ENCODE measurements at regions of chr1 and their contacts with region 1.

Region 1: GRCh38 chr1:61851849-61852669 is 109.8 kb downstream of the PATJ start:
- DNase-seq: peak; percentile 74
- H3K4me3 ChIP-seq: no peak overlapping the region
- H3K27ac ChIP-seq: peak overlapping the region; percentile 45
- H3K4me1 ChIP-seq: peaks cover 14% of the 10 kb centered on the region
- H3K27me3 ChIP-seq: no peaks in the 10 kb centered on the region
- CTCF ChIP-seq: peak; percentile 40 to 58
- POLR2A ChIP-seq: no peak

Region 2: DNA sequence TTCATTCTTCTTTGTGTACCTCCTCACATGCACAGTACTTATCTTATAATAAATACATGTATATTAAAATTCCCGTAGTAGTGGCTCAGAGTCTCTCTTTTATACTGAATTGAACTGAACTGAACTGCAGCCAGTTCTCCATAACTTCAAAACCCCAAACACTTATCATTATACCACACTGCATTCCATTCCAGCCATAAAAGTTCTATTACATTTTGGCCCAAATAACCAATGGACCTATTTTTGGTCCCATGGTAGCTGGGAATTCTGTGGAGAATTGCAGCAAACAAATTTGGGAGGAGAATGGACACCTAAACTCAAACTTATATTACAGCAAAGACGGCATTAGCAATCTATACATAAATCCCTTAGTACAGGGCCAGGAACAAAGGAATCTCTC is 1691.9 kb before region 1 on chr1:
- CTCF ChIA-PET with region 1: interaction called, 11 read pairs
- POLR2A ChIA-PET with region 1: no interaction called
- dilution Hi-C with region 1: no loop called
- intact Hi-C with region 1: loop called (anchors 1 kb)
- DNase-seq: no peak
- H3K4me3 ChIP-seq: no peak overlapping the region
- H3K27ac ChIP-seq: no peak overlapping the region
- H3K4me1 ChIP-seq: no peaks in the 10 kb centered on the region
- H3K27me3 ChIP-seq: no peaks in the 10 kb centered on the region
- CTCF ChIP-seq: no peak
- POLR2A ChIP-seq: no peak

Region 3: GRCh38 chr1:60969971-60970509 is 882.0 kb before region 1 on chr1:
- CTCF ChIA-PET with region 1: interaction called, 7 read pairs
- POLR2A ChIA-PET with region 1: no interaction called
- dilution Hi-C with region 1: no loop called
- intact Hi-C with region 1: loop called (anchors 2 kb)
- DNase-seq: peak; percentile 57
- H3K4me3 ChIP-seq: no peak overlapping the region
- H3K27ac ChIP-seq: no peak overlapping the region
- H3K4me1 ChIP-seq: peaks cover 5% of the 10 kb centered on the region
- H3K27me3 ChIP-seq: no peaks in the 10 kb centered on the region
- CTCF ChIP-seq: peak in 1 of 2 donors; percentile 21
- POLR2A ChIP-seq: no peak

Region 4: GRCh38 chr1:61049850-61050540 is 802.1 kb before region 1 on chr1:
- CTCF ChIA-PET with region 1: interaction called, 65 read pairs
- POLR2A ChIA-PET with region 1: no interaction called
- dilution Hi-C with region 1: no loop called
- intact Hi-C with region 1: loop called (anchors 1 kb)
- DNase-seq: peak; percentile 93
- H3K4me3 ChIP-seq: peak overlapping the region; percentile 62 to 95 (median 92)
- H3K27ac ChIP-seq: peak overlapping the region; percentile 84
- H3K4me1 ChIP-seq: peaks cover 16% of the 10 kb centered on the region
- H3K27me3 ChIP-seq: no peaks in the 10 kb centered on the region
- CTCF ChIP-seq: peak; percentile 89 to 96
- POLR2A ChIP-seq: peak; percentile 40

Region 5: DNA sequence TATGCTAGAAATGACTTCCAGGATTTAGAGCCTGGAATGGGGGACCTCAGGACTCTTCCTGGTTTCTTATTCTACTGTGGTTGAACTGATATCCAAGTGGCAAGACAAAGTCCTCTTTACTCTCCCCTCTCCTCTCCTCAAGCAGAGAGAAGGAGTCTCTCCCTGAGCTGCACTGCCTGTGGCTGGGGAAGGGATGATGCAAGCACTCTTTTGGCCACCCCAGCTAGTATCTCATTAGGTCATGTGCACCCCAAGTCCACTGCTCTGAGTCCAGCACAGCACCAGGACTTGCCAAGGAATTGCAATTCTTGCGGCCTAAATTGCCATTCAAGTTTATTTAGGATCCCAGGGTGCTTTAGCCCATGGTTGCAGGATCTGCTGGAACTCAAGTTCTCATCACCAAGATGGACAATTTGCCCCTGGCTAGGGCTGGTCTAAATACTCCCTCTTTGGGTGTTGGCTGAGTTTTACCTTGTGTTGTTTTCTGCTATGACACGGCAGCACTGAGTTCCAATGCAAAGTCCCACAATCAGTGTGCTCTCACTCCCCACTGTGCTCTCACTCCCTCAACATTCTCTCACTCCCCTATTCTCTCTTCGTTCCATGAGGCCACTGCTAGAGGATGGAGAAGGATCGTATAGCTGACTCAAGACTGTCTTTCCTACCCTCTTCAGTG is 299.3 kb before region 1 on chr1:
- CTCF ChIA-PET with region 1: no interaction called
- POLR2A ChIA-PET with region 1: no interaction called
- dilution Hi-C with region 1: no loop called
- intact Hi-C with region 1: no loop called
- DNase-seq: no peak
- H3K4me3 ChIP-seq: no peak overlapping the region
- H3K27ac ChIP-seq: no peak overlapping the region
- H3K4me1 ChIP-seq: no peaks in the 10 kb centered on the region
- H3K27me3 ChIP-seq: peaks cover 0 to 2% of the 10 kb centered on the region in 2 experiments
- CTCF ChIP-seq: no peak
- POLR2A ChIP-seq: no peak

Region 6: DNA sequence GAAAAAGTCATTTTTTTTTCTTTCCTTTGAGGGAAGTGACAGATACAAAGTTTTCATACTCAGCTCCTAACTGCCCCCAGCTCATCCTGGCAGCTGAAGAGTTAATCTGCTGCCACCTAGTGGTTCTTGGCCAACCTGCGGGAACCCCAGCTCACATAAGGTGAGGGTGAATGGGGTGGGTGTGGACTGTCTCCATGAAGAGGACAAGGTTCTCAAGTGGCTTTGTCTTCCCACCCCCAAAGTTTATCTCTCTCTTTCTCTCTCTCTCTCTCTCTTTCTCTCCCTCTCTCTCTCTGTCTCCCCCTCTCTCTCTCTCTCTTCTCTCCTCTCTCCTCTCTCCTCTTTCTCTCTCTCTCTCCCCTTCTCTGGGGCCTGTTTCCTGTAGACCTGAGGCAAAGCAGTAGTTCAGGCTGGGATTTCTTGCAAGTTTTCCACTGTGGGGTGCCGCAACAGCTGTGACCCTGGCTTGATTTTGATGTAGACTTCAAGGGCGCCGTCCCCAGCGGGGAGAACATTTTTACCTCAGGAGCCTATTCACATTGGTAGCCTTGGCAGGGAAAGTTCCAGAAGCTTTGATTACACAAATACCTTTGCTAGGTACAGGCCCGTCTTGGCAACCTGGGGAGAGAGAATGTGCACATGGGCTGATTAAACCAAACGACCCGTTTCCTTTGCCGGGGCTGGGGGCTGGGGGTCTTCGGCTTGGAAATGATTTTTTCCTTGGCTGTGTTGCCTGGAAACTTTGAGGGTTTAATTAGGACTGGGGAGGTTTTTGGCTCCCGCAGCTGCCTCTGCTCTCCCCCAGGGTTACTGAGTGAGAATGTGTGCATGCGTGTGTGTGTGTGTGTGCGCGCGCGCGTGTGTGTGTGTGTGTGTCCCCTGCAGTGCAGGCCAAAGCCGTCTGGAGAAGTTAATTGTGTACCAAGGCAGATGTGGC is 263.1 kb before region 1 on chr1:
- CTCF ChIA-PET with region 1: interaction called, 31 read pairs
- POLR2A ChIA-PET with region 1: no interaction called
- dilution Hi-C with region 1: no loop called
- intact Hi-C with region 1: loop called (anchors 1 kb)
- DNase-seq: peak; percentile 69
- H3K4me3 ChIP-seq: no peak overlapping the region
- H3K27ac ChIP-seq: no peak overlapping the region
- H3K4me1 ChIP-seq: no peaks in the 10 kb centered on the region
- H3K27me3 ChIP-seq: peaks cover 0 to 2% of the 10 kb centered on the region in 2 experiments
- CTCF ChIP-seq: peak; percentile 83 to 86
- POLR2A ChIP-seq: no peak

Region 7: GRCh38 chr1:61724813-61725694 is 127.0 kb before region 1 on chr1 and contains the start of gene TM2D1:
- CTCF ChIA-PET with region 1: interaction called, 3 read pairs
- POLR2A ChIA-PET with region 1: no interaction called
- dilution Hi-C with region 1: no loop called
- intact Hi-C with region 1: loop called (anchors 1 kb)
- DNase-seq: peak; percentile 88
- H3K4me3 ChIP-seq: peak within 1 kb of the TSS; percentile 81 to 97 (median 87)
- H3K27ac ChIP-seq: peak within 1 kb of the TSS; percentile 97
- H3K4me1 ChIP-seq: peaks cover 18% of the 10 kb centered on the region
- H3K27me3 ChIP-seq: no peaks in the 10 kb centered on the region
- CTCF ChIP-seq: no peak
- POLR2A ChIP-seq: peak; percentile 99
- total RNA-seq, gene TM2D1: 37.5 and 46.1 TPM in 2 replicates

Region 8: DNA sequence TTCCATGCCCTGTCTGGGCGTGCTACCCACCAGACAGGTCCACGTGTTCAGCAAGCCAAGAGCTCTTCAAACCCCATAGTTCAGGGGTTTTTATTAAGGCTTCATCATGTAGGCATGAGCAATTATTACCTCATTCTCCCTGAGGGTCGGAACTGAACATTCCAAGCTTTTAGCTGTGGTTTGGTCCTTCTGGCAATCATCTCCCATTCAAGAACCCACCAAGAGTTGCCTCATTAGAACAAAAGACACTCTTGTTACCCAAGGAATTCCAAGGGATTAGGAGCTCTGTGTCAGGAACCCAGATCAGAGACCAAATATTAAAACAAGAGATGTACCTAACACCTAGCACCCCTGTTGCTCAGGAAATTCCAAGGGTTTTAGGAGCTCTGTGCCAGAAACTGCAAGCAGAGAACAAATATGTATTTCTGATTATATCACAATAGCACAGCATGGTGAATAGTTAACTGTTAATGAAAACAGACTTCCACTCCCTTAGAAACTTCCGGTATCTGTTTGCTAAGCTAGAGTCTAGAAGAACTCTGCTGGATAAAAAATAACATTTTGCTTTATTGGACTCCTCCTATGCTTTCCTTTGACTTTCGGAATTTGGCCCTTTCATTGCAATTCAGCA is 141.4 kb after region 1 on chr1:
- CTCF ChIA-PET with region 1: no interaction called
- POLR2A ChIA-PET with region 1: no interaction called
- dilution Hi-C with region 1: no loop called
- intact Hi-C with region 1: no loop called
- DNase-seq: no peak
- H3K4me3 ChIP-seq: no peak overlapping the region
- H3K27ac ChIP-seq: no peak overlapping the region
- H3K4me1 ChIP-seq: no peaks in the 10 kb centered on the region
- H3K27me3 ChIP-seq: no peaks in the 10 kb centered on the region
- CTCF ChIP-seq: no peak
- POLR2A ChIP-seq: no peak

Region 9: DNA sequence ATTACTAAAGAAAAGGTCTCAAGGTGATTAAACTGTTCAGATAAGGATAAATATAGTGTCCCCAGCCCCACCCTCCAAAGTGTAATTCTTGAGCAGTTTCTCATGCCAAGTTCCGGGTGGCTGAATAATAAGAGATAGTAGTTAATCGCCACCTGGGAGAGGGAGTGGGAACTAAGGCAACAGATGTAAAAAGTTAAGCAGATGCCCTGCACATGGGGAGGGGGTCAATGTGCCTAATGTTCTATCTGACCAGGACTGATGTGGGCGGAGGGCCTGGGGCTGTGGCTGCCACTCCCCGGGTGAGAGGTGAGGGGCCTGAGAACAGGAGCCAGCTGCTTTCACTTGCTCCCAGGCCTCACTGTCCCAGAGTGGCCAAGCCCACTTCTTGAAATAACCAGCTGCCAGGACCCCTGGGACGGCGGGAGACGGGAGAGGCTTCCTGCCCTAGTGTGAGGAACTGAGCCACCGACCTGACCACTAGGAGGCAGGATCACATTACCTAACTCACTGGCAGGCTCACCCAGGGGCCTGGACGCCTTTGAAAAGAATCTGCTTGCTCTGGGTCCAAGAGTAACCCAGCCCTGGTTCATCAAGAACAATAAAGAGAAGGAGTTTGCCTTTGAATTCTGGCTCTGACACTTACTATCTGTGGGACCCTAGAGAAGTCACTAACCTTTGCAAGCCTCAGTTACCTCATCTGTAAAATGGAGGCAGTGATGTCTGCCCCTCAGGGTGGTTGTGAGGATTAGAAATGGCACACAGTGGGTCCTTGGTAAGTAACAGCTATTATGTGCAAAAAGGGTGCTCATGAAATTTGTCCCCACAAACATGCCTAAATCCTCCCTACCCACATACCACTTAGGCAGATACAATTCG is 1111.1 kb after region 1 on chr1:
- CTCF ChIA-PET with region 1: no interaction called
- POLR2A ChIA-PET with region 1: no interaction called
- dilution Hi-C with region 1: no loop called
- intact Hi-C with region 1: no loop called
- DNase-seq: peak; percentile 29
- H3K4me3 ChIP-seq: no peak overlapping the region
- H3K27ac ChIP-seq: no peak overlapping the region
- H3K4me1 ChIP-seq: no peaks in the 10 kb centered on the region
- H3K27me3 ChIP-seq: no peaks in the 10 kb centered on the region
- CTCF ChIP-seq: peak; percentile 51 to 67
- POLR2A ChIP-seq: no peak